ENCODE measurements at regions of chr16 and their contacts with region 1.

Region 1: GRCh38 chr16:85027349-85027957 is at the start of gene KIAA0513:
- DNase-seq: peak; percentile 95
- ATAC-seq: peak; percentile 81
- H3K4me3 Mint-ChIP-seq: peak within 1 kb of the TSS; percentile 87
- H3K27ac Mint-ChIP-seq: peak within 1 kb of the TSS; percentile 86
- H3K4me1 Mint-ChIP-seq: peaks cover 41% of the 10 kb centered on the region
- H3K27me3 Mint-ChIP-seq: no peaks in the 10 kb centered on the region
- total RNA-seq, gene KIAA0513: 8.1 to 9.1 TPM

Region 2: DNA sequence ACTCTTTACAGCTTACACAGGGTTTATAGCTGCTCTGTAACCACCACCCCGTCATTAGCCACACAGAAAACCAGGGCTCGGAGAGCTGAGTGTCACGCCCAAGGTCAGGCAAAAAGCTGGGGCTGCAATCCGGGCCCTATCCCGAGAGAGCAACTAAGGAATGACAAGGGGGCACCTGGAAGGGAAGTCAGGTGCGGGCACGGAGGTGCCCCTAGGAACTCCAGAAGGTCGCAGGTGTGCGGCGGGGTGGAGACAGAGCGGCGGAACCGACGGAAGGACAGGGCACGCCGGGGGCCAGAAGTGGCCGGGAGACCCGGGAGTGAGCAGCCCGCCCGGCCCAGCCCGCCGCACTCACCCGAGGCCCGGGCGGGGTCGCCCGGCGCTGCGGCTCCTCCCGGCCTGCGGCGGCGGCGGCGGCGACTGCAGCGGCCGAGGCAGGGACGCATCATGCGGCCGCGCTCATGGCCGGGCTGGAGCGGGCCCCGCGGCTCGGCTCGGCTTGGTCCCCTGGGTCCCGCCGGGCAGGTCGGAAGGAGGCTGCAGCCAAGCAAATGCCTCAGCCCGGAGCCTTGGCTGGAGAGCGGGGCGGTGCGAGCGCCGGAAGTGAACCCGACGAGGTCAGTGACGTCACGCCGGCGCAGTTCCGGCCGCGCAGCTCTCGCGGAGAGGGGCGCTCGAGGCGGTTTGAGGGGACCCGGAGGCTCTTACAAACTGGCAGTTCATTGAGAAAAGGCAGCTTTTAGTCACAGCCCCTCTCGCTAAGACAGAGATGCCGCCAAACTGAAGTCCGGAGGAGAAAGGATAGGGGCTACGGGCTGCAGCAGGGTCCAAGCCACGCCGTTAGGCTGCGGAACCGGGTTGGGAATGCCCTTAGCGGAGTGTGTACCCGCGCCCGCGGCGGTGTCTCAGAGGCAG is 16.3 kb before region 1 on chr16 and contains the start of gene ZDHHC7:
- CTCF ChIA-PET with region 1: interaction called, 18 read pairs
- POLR2A ChIA-PET with region 1: interaction called, 21 read pairs
- DNase-seq: peak; percentile 91
- ATAC-seq: peak; percentile 94
- H3K4me3 Mint-ChIP-seq: peak within 1 kb of the TSS; percentile 96
- H3K27ac Mint-ChIP-seq: peak within 1 kb of the TSS; percentile 98
- H3K4me1 Mint-ChIP-seq: peaks cover 21% of the 10 kb centered on the region
- H3K27me3 Mint-ChIP-seq: peaks cover 4% of the 10 kb centered on the region
- total RNA-seq, gene ZDHHC7: 28.1 to 28.7 TPM

Region 3: GRCh38 chr16:85017151-85017550 is 10.3 kb before region 1 on chr16:
- CTCF ChIA-PET with region 1: interaction called, 10 read pairs
- POLR2A ChIA-PET with region 1: interaction called, 6 read pairs
- DNase-seq: no peak
- ATAC-seq: peak; percentile 38
- H3K4me3 Mint-ChIP-seq: no peak overlapping the region
- H3K27ac Mint-ChIP-seq: no peak overlapping the region
- H3K4me1 Mint-ChIP-seq: peaks cover 16% of the 10 kb centered on the region
- H3K27me3 Mint-ChIP-seq: peaks cover 20% of the 10 kb centered on the region

Region 4: GRCh38 chr16:85055503-85056210 is 28.2 kb after region 1 on chr16:
- CTCF ChIA-PET with region 1: interaction called, 23 read pairs
- POLR2A ChIA-PET with region 1: interaction called, 19 read pairs
- DNase-seq: peak; percentile 95
- ATAC-seq: peak; percentile 99
- H3K4me3 Mint-ChIP-seq: peak overlapping the region; percentile 76
- H3K27ac Mint-ChIP-seq: peak overlapping the region; percentile 98
- H3K4me1 Mint-ChIP-seq: peaks cover 41% of the 10 kb centered on the region
- H3K27me3 Mint-ChIP-seq: peaks cover 3% of the 10 kb centered on the region